ENCODE measurements at regions of chrX and their contacts with region 1.

Region 1: DNA sequence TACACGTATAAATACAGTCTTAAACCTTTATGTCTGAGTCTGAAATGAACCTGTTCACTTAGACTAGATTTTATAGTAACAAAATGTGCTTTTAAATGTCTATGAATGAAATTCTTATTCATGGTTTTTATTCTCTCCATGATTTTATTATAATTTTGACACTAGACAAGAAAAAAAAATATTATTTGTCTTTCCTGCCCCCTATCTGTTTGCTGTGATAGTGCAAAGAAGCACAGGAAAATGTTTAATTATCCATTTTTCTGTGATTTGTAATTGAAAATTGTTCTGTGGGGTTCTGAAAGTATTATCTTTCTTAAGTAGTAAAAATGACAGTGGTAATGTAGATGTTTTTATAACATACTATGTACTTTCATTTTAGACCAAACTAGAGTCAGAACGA is 52.0 kb downstream of the INTS6L start:
- DNase-seq: no peak
- H3K4me3 ChIP-seq: no peak overlapping the region
- H3K27ac ChIP-seq: no peak overlapping the region
- H3K4me1 ChIP-seq: no peaks in the 10 kb centered on the region
- H3K27me3 ChIP-seq: no peaks in the 10 kb centered on the region
- CTCF ChIP-seq: peak in 1 of 3 donors; percentile 29
- EP300 ChIP-seq: no peak
- POLR2A ChIP-seq: no peak

Region 2: GRCh38 chrX:135484641-135485289 is 87.7 kb before region 1 on chrX:
- intact Hi-C with region 1: loop called in 1 of 4 experiments (anchors 10 kb)
- DNase-seq: no peak
- H3K4me3 ChIP-seq: no peak overlapping the region
- H3K27ac ChIP-seq: no peak overlapping the region
- H3K4me1 ChIP-seq: peaks cover 2% of the 10 kb centered on the region
- H3K27me3 ChIP-seq: no peaks in the 10 kb centered on the region
- CTCF ChIP-seq: peak in 2 of 3 donors; percentile 44 to 48
- EP300 ChIP-seq: no peak
- POLR2A ChIP-seq: no peak

Region 3: GRCh38 chrX:135536877-135537276 is 35.6 kb before region 1 on chrX:
- intact Hi-C with region 1: loop called in 1 of 4 experiments (anchors 5 kb)
- DNase-seq: no peak
- H3K4me3 ChIP-seq: no peak overlapping the region
- H3K27ac ChIP-seq: no peak overlapping the region
- H3K4me1 ChIP-seq: peaks cover 1% of the 10 kb centered on the region
- H3K27me3 ChIP-seq: no peaks in the 10 kb centered on the region
- CTCF ChIP-seq: no peak
- EP300 ChIP-seq: no peak
- POLR2A ChIP-seq: no peak